BJ (cell line): ENCODE measurements at regions of chr7 and their contacts with region 1.

Region 1: GRCh38 chr7:126803060-126803665 is 449.6 kb downstream of the GRM8 start:
- DNase-seq: peak; percentile 7
- H3K4me3 ChIP-seq: no peak overlapping the region
- H3K27me3 ChIP-seq: no peaks in the 10 kb centered on the region
- CTCF ChIP-seq: peak; percentile 59

Region 2: GRCh38 chr7:126790763-126791162 is 12.4 kb before region 1 on chr7:
- CTCF ChIA-PET with region 1: interaction called, 13 read pairs
- POLR2A ChIA-PET with region 1: no interaction called
- DNase-seq: no peak
- H3K4me3 ChIP-seq: no peak overlapping the region
- H3K27me3 ChIP-seq: no peaks in the 10 kb centered on the region
- CTCF ChIP-seq: no peak